ENCODE measurements at regions of chr5 and their contacts with region 1.

Region 1: DNA sequence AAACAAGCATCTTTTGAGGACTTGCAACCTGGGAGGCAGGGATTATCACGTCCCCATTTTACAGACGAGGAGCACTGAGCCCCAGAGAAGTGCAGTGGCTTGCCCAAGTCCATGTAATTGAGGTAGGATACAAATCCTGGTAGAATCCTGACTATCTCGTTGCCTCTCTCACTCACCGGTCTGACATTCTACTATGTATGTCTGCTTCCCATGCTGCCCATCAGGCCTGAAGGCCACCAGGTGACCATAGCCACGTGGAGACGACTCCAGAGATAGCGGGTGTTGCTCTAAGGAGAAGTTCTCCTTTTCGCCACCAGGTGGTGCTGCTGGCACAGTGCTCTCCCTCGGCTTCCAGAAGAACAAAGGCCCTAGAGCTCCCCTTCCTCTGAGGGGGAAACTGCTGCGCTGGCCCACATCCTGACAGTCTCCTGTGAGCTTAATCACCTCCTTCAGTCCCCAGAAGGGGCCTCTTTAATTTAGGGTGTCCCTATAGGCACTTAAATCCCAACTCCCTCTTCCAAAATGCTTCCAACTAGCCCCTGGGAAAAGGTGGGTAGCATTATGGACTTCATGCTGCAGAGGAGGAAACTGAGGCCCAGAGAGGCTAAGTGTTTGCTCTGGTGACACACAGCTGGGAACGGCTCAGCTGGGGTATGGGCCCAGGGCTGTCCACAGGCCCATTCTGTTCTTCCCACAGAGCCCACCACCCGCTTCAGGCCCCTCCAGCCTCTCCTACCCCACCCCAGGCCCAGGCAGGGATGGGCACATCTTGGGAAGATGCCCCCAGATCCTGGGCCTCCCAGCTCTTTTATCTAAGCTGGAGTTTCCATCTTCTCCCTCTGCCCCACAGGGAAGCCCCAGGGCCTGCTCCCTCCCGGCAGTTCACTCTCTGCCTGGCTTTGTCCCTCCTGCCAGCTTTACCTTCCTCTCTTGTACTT is 6.4 kb downstream of the SLC34A1 start:
- DNase-seq: peak; percentile 90
- ATAC-seq: peak; percentile 93
- H3K4me3 ChIP-seq: no peak overlapping the region
- H3K4me3 Mint-ChIP-seq: no peak overlapping the region
- H3K27ac ChIP-seq: no peak overlapping the region
- H3K27ac Mint-ChIP-seq: peak overlapping the region; percentile 7
- H3K4me1 ChIP-seq: peaks cover 14 to 24% of the 10 kb centered on the region in 2 donors
- H3K4me1 Mint-ChIP-seq: peaks cover 27% of the 10 kb centered on the region
- H3K27me3 ChIP-seq: peaks cover 0 to 5% (median 0%) of the 10 kb centered on the region in 4 experiments
- H3K27me3 Mint-ChIP-seq: peaks cover 3% of the 10 kb centered on the region
- CTCF ChIP-seq: peak; percentile 94

Region 2: GRCh38 chr5:177311723-177312648 is 78.6 kb before region 1 on chr5 and contains the start of gene MXD3:
- CTCF ChIA-PET with region 1: interaction called, 14 read pairs
- POLR2A ChIA-PET with region 1: no interaction called
- intact Hi-C with region 1: no loop called
- DNase-seq: peak; percentile 94
- ATAC-seq: peak; percentile 89
- H3K4me3 ChIP-seq: peak within 1 kb of the TSS; percentile 15 to 80 (median 63)
- H3K4me3 Mint-ChIP-seq: peak within 1 kb of the TSS; percentile 90
- H3K27ac ChIP-seq: peak within 1 kb of the TSS; percentile 27 to 34
- H3K27ac Mint-ChIP-seq: peak within 1 kb of the TSS; percentile 84
- H3K4me1 ChIP-seq: peaks cover 40 to 58% of the 10 kb centered on the region in 2 donors
- H3K4me1 Mint-ChIP-seq: peaks cover 41% of the 10 kb centered on the region
- H3K27me3 ChIP-seq: no peaks in the 10 kb centered on the region
- H3K27me3 Mint-ChIP-seq: no peaks in the 10 kb centered on the region
- CTCF ChIP-seq: no peak
- total RNA-seq, gene MXD3: 10.8 and 11.5 TPM in 2 replicates

Region 3: GRCh38 chr5:177344891-177345290 is 45.7 kb before region 1 on chr5:
- CTCF ChIA-PET with region 1: no interaction called
- POLR2A ChIA-PET with region 1: no interaction called
- intact Hi-C with region 1: no loop called
- DNase-seq: no peak
- ATAC-seq: no peak
- H3K4me3 ChIP-seq: no peak overlapping the region
- H3K4me3 Mint-ChIP-seq: no peak overlapping the region
- H3K27ac ChIP-seq: no peak overlapping the region
- H3K27ac Mint-ChIP-seq: no peak overlapping the region
- H3K4me1 ChIP-seq: peaks cover 8 to 9% of the 10 kb centered on the region in 2 donors
- H3K4me1 Mint-ChIP-seq: peaks cover 25% of the 10 kb centered on the region
- H3K27me3 ChIP-seq: no peaks in the 10 kb centered on the region
- H3K27me3 Mint-ChIP-seq: no peaks in the 10 kb centered on the region
- CTCF ChIP-seq: no peak

Region 4: DNA sequence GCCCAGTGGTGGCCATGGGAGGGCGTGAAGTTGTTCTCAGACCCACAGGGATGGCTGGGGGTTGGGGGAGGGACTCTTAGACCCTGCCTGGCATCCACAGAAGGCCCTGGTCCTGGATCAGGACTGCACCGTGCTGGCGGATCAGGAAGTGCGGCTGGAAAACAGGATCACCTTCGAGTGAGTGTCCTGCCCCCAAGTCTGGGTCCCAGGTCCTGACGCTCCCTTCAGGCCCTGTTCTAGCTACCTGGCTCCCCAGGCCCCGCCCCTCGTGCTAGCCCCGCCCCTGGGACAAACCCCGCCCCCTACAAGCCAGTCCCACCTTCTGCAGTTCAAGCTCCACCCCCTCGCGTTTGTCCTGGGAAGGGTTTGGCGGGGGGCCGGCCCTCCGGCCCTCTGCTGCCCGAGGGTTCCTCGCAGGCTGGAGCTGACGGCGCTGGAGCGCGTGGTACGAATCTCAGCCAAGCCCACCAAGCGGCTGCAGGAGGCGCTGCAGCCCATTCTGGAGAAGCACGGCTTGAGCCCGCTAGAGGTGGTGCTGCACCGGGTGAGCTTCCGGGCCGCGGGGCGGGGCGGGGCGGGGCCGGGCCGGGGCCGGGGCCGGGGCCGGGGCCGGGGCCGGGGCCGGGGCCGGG is 20.0 kb before region 1 on chr5:
- CTCF ChIA-PET with region 1: interaction called, 44 read pairs
- POLR2A ChIA-PET with region 1: interaction called, 3 read pairs
- intact Hi-C with region 1: no loop called
- DNase-seq: peak; percentile 63
- ATAC-seq: peak; percentile 75
- H3K4me3 ChIP-seq: peak overlapping the region in 1 of 5 experiments; percentile 42
- H3K4me3 Mint-ChIP-seq: peak overlapping the region; percentile 63
- H3K27ac ChIP-seq: no peak overlapping the region
- H3K27ac Mint-ChIP-seq: no peak overlapping the region
- H3K4me1 ChIP-seq: peaks cover 35 to 38% of the 10 kb centered on the region in 2 donors
- H3K4me1 Mint-ChIP-seq: peaks cover 42% of the 10 kb centered on the region
- H3K27me3 ChIP-seq: no peaks in the 10 kb centered on the region
- H3K27me3 Mint-ChIP-seq: no peaks in the 10 kb centered on the region
- CTCF ChIP-seq: peak; percentile 33

Region 5: DNA sequence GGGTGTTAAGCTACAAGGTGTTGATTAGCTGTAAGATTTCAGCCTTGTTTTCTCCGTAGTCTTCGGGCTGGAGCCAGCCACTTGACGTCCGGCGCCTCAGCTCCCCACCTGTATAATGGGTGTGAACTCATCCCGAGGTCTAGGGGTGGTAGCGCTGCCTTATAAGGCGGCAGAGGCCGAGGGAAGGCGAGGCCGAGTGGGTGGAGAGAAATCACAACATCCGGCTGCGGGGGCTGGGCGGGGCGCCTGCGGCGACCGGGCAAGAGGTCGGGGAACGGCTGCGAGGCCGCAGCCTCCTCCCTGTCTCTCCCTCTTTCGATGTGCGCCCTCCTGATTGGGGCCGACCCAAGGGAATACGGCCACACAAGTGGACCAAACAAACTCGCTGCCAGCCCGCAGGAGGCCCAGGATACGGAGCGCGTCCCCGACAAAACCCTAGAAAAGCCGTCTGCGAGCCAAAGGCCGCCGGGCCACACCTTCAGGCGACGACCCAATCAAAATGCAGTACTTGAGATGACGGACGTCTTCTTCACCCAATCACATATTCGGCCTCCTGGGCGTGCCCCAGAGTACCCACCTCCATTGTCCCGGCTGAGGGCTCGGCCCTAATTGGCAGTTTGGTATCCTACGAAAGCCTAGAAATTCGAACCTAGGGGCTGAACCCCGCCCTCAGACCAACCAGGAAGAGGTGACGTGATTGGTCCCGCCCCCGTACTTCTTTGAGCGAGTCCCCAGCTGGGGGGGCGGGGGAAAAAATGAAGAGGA is 35.4 kb after region 1 on chr5:
- CTCF ChIA-PET with region 1: interaction called, 11 read pairs
- POLR2A ChIA-PET with region 1: no interaction called
- intact Hi-C with region 1: no loop called
- DNase-seq: peak; percentile 100
- ATAC-seq: peak; percentile 82
- H3K4me3 ChIP-seq: peak overlapping the region; percentile 28 to 74 (median 61)
- H3K4me3 Mint-ChIP-seq: peak overlapping the region; percentile 93
- H3K27ac ChIP-seq: peak overlapping the region; percentile 82 to 88
- H3K27ac Mint-ChIP-seq: peak overlapping the region; percentile 97
- H3K4me1 ChIP-seq: peaks cover 47 to 49% of the 10 kb centered on the region in 2 donors
- H3K4me1 Mint-ChIP-seq: peaks cover 49% of the 10 kb centered on the region
- H3K27me3 ChIP-seq: no peaks in the 10 kb centered on the region
- H3K27me3 Mint-ChIP-seq: no peaks in the 10 kb centered on the region
- CTCF ChIP-seq: no peak

Region 6: GRCh38 chr5:177497292-177498033 is 106.8 kb after region 1 on chr5 and contains the start of gene PDLIM7:
- CTCF ChIA-PET with region 1: interaction called, 47 read pairs
- POLR2A ChIA-PET with region 1: no interaction called
- intact Hi-C with region 1: loop called (anchors 1 kb)
- DNase-seq: peak; percentile 97
- ATAC-seq: peak; percentile 84
- H3K4me3 ChIP-seq: peak within 1 kb of the TSS; percentile 9 to 68 (median 65)
- H3K4me3 Mint-ChIP-seq: peak within 1 kb of the TSS; percentile 93
- H3K27ac ChIP-seq: no peak within 1 kb of the TSS
- H3K27ac Mint-ChIP-seq: peak within 1 kb of the TSS; percentile 73
- H3K4me1 ChIP-seq: peaks cover 58 to 72% of the 10 kb centered on the region in 2 donors
- H3K4me1 Mint-ChIP-seq: peaks cover 75% of the 10 kb centered on the region
- H3K27me3 ChIP-seq: peaks cover 0 to 10% (median 4%) of the 10 kb centered on the region in 4 experiments
- H3K27me3 Mint-ChIP-seq: peaks cover 3% of the 10 kb centered on the region
- CTCF ChIP-seq: no peak
- total RNA-seq, gene PDLIM7: 24.2 and 25.8 TPM in 2 replicates

Region 7: DNA sequence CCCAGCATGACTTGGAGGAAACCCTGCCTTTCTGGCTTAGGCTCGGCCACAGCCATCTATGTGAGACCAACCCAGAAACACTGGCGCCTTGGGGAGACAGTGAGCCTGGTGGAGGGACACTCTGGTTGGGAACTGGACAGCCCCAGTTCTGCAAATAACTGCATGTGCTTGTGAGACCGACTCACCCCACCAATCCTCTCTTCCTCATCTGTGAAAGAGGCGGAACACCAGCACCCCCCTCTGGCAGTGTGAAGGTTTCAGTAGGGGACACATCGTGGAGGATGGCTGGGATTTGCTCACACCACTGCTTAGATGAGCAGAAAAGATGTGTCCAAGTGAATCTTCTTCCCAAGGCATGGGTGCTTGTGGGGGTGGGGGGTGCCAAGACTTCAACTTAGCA is 679.3 kb after region 1 on chr5:
- CTCF ChIA-PET with region 1: no interaction called
- POLR2A ChIA-PET with region 1: no interaction called
- intact Hi-C with region 1: loop called (anchors 2 kb)
- DNase-seq: peak; percentile 75
- ATAC-seq: peak; percentile 78
- H3K4me3 ChIP-seq: no peak overlapping the region
- H3K4me3 Mint-ChIP-seq: no peak overlapping the region
- H3K27ac ChIP-seq: no peak overlapping the region
- H3K27ac Mint-ChIP-seq: no peak overlapping the region
- H3K4me1 ChIP-seq: peaks cover 26 to 27% of the 10 kb centered on the region in 2 donors
- H3K4me1 Mint-ChIP-seq: peaks cover 16% of the 10 kb centered on the region
- H3K27me3 ChIP-seq: peaks cover 0 to 18% (median 4%) of the 10 kb centered on the region in 4 experiments
- H3K27me3 Mint-ChIP-seq: peaks cover 18% of the 10 kb centered on the region
- CTCF ChIP-seq: peak; percentile 63